Transverse colon (tissue), 4 donors: ENCODE measurements at regions of chr14 and their contacts with region 1.

Region 1: GRCh38 chr14:102437997-102438915 is 71.3 kb downstream of the ANKRD9 start:
- DNase-seq: peak; percentile 91
- H3K4me3 ChIP-seq: peak overlapping the region in 2 of 4 donors; percentile 4 to 10
- H3K27ac ChIP-seq: peak overlapping the region in 3 of 4 donors; percentile 3 to 58 (median 38)
- H3K4me1 ChIP-seq: peaks cover 5 to 20% (median 14%) of the 10 kb centered on the region in 4 donors
- H3K27me3 ChIP-seq: no peaks in the 10 kb centered on the region
- CTCF ChIP-seq: peak; percentile 74 to 87 (median 77)
- EP300 ChIP-seq: no peak
- POLR2A ChIP-seq: no peak

Region 2: DNA sequence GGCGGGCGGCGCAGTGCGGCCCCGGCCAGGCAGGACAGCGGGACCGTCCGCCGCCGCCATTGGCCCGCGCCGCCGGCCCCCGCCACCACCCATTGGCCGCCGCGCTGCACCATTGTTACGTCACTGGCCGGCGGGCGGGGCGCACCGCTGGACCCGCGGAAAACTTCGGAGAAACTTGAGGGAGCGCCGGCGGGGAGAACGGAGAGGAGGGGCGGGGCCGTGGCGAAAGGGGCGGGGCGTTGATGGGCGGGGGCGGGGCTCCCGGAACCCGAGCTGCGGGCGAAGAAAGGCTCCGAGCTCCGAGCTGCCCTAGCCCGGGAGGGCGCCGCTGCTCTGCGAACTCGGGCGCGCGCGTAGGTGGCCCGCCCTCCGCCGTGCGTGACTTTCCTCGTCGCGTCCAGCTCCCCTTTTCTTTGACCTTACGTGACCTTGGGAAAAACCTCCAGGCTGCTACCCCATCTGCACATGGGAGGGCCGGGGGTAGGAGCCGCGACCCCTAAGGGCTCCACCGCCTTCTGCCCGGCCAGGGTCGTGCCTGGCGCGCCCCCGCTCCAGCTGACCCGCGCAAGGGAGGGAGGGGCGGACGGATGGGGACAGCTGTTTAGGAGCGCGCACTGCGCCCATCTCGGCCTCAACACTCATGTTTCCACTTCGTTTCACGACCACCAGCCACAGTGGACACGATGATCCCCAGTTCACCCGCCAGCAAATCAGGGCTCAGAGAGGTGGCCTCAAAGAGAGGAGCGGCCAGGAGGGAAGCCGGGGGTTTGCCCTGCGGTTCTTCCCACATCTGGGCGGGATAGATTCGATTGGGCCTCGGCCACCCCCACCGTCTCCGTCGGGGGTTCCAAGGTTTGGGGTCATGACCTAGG is 71.7 kb after region 1 on chr14 and contains the start of gene ANKRD9:
- in situ Hi-C with region 1: loop called (anchors 5 to 10 kb)
- intact Hi-C with region 1: no loop called
- DNase-seq: peak; percentile 97
- H3K4me3 ChIP-seq: peak within 1 kb of the TSS; percentile 47 to 69 (median 59)
- H3K27ac ChIP-seq: peak within 1 kb of the TSS; percentile 91 to 95 (median 93)
- H3K4me1 ChIP-seq: peaks cover 14 to 40% (median 28%) of the 10 kb centered on the region in 4 donors
- H3K27me3 ChIP-seq: no peaks in the 10 kb centered on the region
- CTCF ChIP-seq: no peak
- EP300 ChIP-seq: no peak
- POLR2A ChIP-seq: peak; percentile 82
- total RNA-seq, gene ANKRD9: 171 to 504 (median 319) TPM

Region 3: DNA sequence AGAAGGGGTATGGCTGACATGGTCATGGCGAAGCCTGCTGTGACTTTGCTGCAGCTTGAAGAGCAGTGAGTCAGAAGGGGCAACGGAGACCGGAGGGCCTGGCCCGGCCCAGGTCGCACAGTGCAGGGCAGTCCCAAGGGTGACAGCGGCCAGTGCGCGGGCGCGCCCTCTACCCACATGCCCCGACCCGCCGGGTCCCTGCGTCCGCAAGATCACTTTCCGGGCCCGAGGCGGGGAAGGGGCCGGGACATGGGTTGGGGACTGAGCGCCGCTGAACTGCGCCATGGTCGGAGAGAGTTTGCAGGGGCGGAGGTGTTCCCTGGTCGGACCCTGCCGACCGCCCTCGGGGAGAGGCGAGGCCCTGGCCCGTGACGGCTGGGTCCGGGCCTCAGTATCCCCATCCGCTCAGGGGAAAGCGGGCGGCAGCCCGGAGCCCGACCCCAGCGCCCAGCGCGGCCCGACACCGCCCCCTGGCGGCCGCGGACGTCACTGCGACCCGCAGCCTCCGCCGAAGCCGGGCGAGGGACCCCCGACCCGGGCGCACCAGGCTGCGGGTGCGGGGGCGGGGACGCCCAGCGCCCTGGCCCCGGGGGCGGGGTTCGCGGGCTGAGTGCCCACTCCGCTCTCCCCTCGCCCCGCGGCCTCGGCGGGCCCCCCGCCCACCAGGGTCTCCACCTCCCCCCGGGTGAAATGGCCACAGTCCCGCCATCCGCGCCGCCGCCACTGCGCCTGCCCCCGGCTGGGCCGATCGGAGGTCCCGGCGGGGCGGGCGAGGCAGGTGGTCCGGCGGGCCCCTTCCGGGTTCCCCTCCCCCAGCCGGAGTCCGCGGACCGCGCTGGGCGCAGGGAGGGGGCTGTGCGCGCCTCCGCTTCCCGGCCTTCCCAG is 78.5 kb after region 1 on chr14:
- in situ Hi-C with region 1: loop called (anchors 5 to 10 kb)
- intact Hi-C with region 1: loop called (anchors 2 kb)
- DNase-seq: peak; percentile 76
- H3K4me3 ChIP-seq: peak overlapping the region; percentile 71 to 91 (median 79)
- H3K27ac ChIP-seq: peak overlapping the region; percentile 79 to 90 (median 88)
- H3K4me1 ChIP-seq: peaks cover 4 to 16% (median 11%) of the 10 kb centered on the region in 4 donors
- H3K27me3 ChIP-seq: no peaks in the 10 kb centered on the region
- CTCF ChIP-seq: peak; percentile 52 to 95 (median 78)
- EP300 ChIP-seq: no peak
- POLR2A ChIP-seq: peak; percentile 37